ENCODE measurements at regions of chr7 and their contacts with region 1.

Region 1: DNA sequence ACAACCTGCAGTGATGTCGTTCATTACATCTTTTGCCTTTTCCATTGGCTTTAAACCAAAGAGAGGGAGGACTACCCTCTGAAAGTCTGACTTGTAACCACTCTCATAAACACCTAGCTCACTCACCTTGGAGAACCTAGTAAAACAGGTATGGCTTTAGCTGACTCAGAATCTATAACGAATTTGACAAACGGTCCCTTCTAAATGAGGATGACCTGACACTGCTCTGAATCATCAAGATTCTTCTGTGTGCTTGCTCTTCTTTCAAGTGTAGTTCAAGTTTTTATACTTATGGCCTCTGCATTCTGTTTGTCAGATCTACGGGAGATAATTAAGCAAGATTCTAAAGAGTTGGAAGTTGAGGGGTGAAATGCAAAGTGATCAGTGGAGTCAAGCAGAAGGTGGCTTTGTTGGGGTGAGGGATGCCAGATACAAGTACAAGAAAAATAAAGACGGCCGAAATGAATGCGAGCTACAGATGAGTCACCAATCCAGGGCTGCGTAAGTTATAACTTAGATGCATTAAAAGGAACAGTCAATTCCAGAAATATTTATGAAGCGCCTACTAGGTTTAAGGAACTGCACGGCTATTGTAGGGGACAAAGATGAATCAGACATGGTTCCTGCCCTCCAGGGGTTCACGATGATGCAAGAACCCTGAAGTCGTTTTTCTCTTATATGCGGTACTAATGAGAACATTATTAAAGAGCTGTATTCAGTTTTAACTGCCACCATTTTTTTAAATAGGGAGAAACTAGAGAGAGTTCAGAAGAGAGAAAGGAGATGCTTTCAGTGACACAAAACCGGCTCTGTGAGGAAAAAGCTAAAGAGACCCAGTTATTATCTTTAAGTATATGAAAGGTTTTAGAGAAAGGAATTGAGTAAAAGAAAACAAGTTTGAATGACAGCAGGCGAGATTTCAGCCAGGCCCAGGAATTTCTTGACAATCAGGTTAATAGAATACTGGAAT is 6.5 kb downstream of the HIPK2 start:
- DNase-seq: no peak
- H3K4me3 Mint-ChIP-seq: no peak overlapping the region
- H3K27ac Mint-ChIP-seq: peak overlapping the region; percentile 42
- H3K4me1 Mint-ChIP-seq: peaks cover 78% of the 10 kb centered on the region
- H3K27me3 Mint-ChIP-seq: no peaks in the 10 kb centered on the region

Region 2: DNA sequence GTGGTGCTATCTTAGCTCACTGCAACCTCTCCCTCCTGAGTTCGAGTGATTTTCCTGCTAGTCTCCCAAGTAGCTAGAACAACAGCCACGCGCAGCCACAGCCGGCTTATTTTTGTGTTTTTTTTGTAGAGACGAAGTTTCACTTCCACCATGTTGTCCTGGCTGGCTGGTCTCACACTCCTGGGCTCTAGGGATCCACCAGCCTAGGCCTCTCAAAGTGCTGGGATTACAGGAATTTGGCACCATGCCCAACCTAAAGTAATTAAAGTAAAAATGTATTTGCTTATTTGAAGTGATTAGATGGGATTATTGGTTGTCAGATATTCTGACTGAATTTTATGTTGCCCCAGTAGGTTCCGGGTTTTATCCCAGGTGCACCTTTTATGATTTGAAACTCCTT is 388.8 kb before region 1 on chr7:
- intact Hi-C with region 1: no loop called
- DNase-seq: no peak
- H3K4me3 Mint-ChIP-seq: no peak overlapping the region
- H3K27ac Mint-ChIP-seq: no peak overlapping the region
- H3K4me1 Mint-ChIP-seq: peaks cover 5% of the 10 kb centered on the region
- H3K27me3 Mint-ChIP-seq: no peaks in the 10 kb centered on the region

Region 3: DNA sequence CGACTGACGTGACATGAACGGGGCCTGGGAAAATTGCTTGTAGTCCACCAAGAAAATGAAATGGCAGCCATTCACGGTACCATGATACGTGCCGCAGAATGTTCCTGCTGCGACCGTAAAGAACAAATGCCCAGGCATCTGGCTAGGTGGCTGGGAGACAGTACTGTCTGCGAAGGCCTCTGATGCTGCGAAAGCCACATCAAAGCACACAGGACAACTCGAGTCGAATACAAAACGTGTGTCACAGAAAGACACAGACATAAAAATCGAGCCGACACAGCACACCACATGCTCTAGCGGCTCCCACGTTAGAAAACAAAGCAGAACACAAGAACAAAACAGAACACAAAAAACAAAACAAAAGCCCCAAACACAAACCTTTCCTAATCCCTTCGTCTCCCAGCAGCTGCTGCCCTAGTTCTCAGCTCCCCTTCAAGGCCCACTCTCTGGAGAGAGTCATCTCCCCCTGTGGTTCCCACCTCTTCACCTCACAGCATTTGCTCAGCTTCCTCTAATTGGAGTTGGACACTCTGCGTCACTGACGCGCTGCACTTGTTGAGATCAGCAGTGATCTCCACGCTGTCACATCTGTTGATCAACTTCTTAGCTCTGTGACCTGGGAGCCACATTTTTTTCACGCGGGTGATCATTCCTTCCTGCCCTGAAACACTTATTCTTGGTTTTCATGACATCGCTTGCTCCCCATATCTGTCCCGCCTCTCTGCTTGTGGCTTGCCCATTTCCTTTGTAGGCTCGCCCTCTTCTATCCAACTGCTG is 135.6 kb before region 1 on chr7:
- intact Hi-C with region 1: no loop called
- DNase-seq: peak; percentile 91
- H3K4me3 Mint-ChIP-seq: peak overlapping the region; percentile 85
- H3K27ac Mint-ChIP-seq: peak overlapping the region; percentile 95
- H3K4me1 Mint-ChIP-seq: peaks cover 41% of the 10 kb centered on the region
- H3K27me3 Mint-ChIP-seq: no peaks in the 10 kb centered on the region

Region 4: DNA sequence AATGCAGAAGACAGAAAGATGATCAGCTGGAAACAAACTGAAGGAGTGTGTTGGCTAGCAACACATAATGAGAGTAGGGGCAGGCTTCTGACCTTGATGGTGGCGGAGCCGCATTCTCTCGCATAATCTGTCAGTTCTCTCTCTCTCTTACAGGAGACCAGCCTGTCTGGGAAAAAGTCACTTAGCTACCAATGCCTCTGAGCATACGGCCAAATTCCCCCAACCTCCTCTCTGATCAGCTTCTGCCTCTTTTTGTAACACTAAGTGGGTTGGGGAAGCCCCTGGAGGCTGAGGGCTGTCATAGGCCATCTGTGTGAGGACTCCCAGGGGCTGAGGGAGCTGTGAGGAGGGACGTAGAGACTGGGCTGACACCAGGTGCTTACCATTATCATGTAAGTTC is 98.1 kb before region 1 on chr7:
- intact Hi-C with region 1: loop called (anchors 1 kb)
- DNase-seq: peak; percentile 63
- H3K4me3 Mint-ChIP-seq: no peak overlapping the region
- H3K27ac Mint-ChIP-seq: peak overlapping the region; percentile 76
- H3K4me1 Mint-ChIP-seq: peaks cover 35% of the 10 kb centered on the region
- H3K27me3 Mint-ChIP-seq: no peaks in the 10 kb centered on the region

Region 5: GRCh38 chr7:139737221-139738100 is 33.8 kb before region 1 on chr7:
- intact Hi-C with region 1: loop called (anchors 5 kb)
- DNase-seq: peak; percentile 69
- H3K4me3 Mint-ChIP-seq: peak overlapping the region; percentile 48
- H3K27ac Mint-ChIP-seq: peak overlapping the region; percentile 75
- H3K4me1 Mint-ChIP-seq: peaks cover 38% of the 10 kb centered on the region
- H3K27me3 Mint-ChIP-seq: no peaks in the 10 kb centered on the region